H1 (cell line): ENCODE measurements at regions of chr9 and their contacts with region 1.

Region 1: GRCh38 chr9:19028835-19029451 is 4.1 kb downstream of the SAXO1 start:
- DNase-seq: no peak
- H3K4me3 ChIP-seq: no peak overlapping the region
- H3K27ac ChIP-seq: no peak overlapping the region
- H3K4me1 ChIP-seq: no peaks in the 10 kb centered on the region
- H3K27me3 ChIP-seq: no peaks in the 10 kb centered on the region
- CTCF ChIP-seq: peak; percentile 25 to 75 (median 69)
- EP300 ChIP-seq: no peak
- POLR2A ChIP-seq: no peak
- RAD21 ChIP-seq: peak; percentile 84 to 90

Region 2: DNA sequence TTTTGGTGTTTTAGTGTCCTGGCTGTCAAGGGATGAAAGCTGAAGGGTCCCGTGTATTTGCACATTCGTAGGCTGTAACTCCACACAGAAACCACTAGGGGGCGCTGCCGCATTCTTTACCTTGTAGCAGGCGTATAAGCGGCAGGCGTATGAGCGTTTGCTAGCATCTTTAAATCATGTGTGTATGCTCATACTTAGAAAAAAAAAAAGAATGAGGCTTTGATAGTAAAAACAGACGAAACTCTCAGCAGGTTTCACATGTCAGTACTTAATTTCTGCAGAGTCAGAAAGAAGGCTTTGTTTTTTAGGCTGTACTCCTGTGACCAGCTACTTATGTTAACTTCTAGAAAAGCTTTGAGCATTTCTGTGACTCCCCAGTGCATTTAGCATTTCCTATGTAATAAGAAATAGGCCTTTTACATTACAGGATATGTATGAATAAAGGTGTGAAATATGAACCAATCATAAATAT is 773.7 kb before region 1 on chr9:
- CTCF ChIA-PET with region 1: interaction called, 13 read pairs
- POLR2A ChIA-PET with region 1: no interaction called
- DNase-seq: peak; percentile 31 to 87
- H3K4me3 ChIP-seq: no peak overlapping the region
- H3K27ac ChIP-seq: no peak overlapping the region
- H3K4me1 ChIP-seq: no peaks in the 10 kb centered on the region
- H3K27me3 ChIP-seq: no peaks in the 10 kb centered on the region
- CTCF ChIP-seq: peak; percentile 68 to 90 (median 78)
- EP300 ChIP-seq: no peak
- POLR2A ChIP-seq: no peak
- RAD21 ChIP-seq: peak; percentile 90 to 96

Region 3: DNA sequence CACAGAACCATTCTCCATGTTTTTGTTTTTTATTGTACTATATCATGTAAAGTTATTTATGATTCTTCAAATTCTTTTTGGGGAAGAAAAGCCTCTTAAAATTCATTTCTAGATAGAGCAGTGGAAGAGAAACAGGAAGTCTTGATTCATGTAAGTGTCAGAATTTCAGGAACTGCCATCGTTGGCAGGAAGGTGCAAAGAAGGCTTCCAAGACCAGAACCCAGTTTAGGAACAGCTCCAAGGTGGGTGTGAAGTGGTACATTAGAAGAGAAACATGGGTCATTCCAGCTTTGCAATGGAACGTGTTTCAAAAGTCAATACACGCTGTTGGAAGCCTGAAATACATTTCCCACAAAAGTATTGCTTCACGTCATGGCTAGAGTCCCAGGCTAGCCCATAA is 10.7 kb before region 1 on chr9:
- CTCF ChIA-PET with region 1: interaction called, 81 read pairs
- POLR2A ChIA-PET with region 1: no interaction called
- DNase-seq: no peak
- H3K4me3 ChIP-seq: no peak overlapping the region
- H3K27ac ChIP-seq: no peak overlapping the region
- H3K4me1 ChIP-seq: no peaks in the 10 kb centered on the region
- H3K27me3 ChIP-seq: no peaks in the 10 kb centered on the region
- CTCF ChIP-seq: no peak
- EP300 ChIP-seq: no peak
- POLR2A ChIP-seq: no peak
- RAD21 ChIP-seq: no peak